PC-3 (cell line): ENCODE measurements at regions of chr17 and their contacts with region 1.

Region 1: DNA sequence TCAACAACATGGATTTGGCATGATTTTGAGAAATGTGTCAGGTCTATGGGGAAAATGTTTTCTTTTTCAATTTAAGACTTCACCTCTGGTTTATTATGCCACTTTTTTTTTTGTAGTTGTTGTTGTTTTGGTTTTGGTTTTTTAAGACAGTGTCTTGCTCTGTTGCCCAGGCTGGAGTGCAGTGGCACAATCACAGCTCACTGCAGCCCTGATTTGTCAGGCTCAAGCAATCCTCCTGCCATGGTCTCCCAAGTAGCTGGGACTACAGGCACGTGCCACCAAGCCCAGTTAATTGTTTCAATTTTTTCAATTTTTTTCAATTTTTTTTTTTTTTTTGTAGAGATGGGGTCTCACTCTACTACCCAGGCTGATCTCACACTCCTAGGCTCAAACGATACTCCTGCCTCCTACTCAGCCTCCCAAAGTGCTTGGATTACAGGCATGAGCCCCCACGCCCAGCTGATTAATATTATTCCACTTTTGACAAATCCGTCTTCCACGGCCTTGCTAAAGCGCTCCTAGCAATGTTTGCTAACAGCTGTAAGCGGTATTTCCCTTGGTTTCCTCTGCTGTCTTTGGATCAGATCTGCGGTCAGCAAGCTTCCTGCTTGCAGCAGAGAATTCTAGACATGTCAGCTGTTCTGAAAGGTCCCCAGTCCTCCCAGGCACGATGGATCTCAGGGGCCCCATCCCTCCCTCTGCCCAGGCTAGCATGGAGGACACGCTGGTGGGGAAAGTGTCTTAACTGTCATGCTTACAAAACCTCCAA is 7.0 kb upstream of the MILR1 start:
- DNase-seq: no peak
- ATAC-seq: no peak
- H3K4me3 ChIP-seq: no peak overlapping the region
- H3K27ac ChIP-seq: peak overlapping the region; percentile 80
- H3K4me1 ChIP-seq: peaks cover 22% of the 10 kb centered on the region
- H3K27me3 ChIP-seq: no peaks in the 10 kb centered on the region
- CTCF ChIP-seq: no peak

Region 2: GRCh38 chr17:64496786-64497564 is 55.0 kb after region 1 on chr17 and contains the start of gene POLG2:
- CTCF ChIA-PET with region 1: no interaction called
- POLR2A ChIA-PET with region 1: interaction called, 15 read pairs
- intact Hi-C with region 1: no loop called
- DNase-seq: peak; percentile 98
- ATAC-seq: peak; percentile 75
- H3K4me3 ChIP-seq: peak within 1 kb of the TSS; percentile 86
- H3K27ac ChIP-seq: peak within 1 kb of the TSS; percentile 68
- H3K4me1 ChIP-seq: peaks cover 67% of the 10 kb centered on the region
- H3K27me3 ChIP-seq: no peaks in the 10 kb centered on the region
- CTCF ChIP-seq: peak; percentile 85
- total RNA-seq, gene POLG2: 20.3 and 37.7 TPM in 2 replicates

Region 3: GRCh38 chr17:64638552-64639203 is 196.7 kb after region 1 on chr17:
- CTCF ChIA-PET with region 1: no interaction called
- POLR2A ChIA-PET with region 1: no interaction called
- intact Hi-C with region 1: no loop called
- DNase-seq: no peak
- ATAC-seq: no peak
- H3K4me3 ChIP-seq: no peak overlapping the region
- H3K27ac ChIP-seq: no peak overlapping the region
- H3K4me1 ChIP-seq: peaks cover 24% of the 10 kb centered on the region
- H3K27me3 ChIP-seq: no peaks in the 10 kb centered on the region
- CTCF ChIP-seq: no peak